Mammary epithelial cell (primary cell): ENCODE measurements at regions of chr15 and their contacts with region 1.

Region 1: DNA sequence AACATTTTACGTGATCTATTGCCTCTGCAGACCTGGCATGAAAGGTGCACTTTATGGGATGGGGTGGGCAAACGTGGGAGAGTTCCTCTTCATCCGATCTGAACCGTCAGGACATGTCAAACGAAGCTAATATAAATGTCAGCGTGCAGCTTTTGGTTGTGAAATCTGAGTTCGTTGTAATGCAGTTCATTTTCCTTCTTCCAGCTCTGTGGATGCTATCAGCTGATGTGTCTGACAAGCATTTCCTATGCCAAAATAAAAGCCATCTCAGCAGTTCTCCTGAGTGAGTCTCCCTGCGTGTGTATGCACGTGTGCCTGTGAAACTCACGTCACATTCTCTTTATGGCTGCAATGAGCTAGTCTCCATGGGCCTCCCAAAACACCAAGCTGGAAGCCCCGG is 512.3 kb downstream of the MCTP2 start:
- DNase-seq: peak; percentile 56
- H3K4me3 ChIP-seq: peak overlapping the region in 1 of 3 experiments; percentile 9
- H3K27ac ChIP-seq: peak overlapping the region; percentile 18
- H3K4me1 ChIP-seq: peaks cover 23% of the 10 kb centered on the region
- H3K27me3 ChIP-seq: no peaks in the 10 kb centered on the region
- CTCF ChIP-seq: no peak

Region 2: DNA sequence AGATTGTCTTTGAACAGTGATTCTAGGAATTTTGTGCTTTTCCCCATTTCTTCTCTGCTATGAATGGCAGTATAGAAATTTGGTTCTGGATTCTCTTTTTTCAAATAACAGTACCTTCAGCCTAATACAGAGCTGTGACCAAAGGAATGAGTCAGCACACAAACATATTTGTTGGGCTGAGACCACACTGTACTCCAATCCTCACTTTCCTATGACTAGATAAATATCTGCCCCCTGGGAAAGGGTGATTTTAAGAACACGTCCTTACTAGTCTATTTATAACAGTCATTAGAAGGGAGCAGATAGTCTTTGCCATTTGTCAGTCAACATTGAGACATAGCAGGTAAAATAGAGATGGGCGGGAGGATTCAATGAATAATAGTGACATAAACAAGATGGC is 51.0 kb before region 1 on chr15:
- CTCF ChIA-PET with region 1: no interaction called
- dilution Hi-C with region 1: loop called (anchors 5 kb)
- in situ Hi-C with region 1: no loop called
- intact Hi-C with region 1: no loop called
- DNase-seq: peak; percentile 81
- H3K4me3 ChIP-seq: no peak overlapping the region
- H3K27ac ChIP-seq: peak overlapping the region; percentile 14
- H3K4me1 ChIP-seq: peaks cover 19% of the 10 kb centered on the region
- H3K27me3 ChIP-seq: no peaks in the 10 kb centered on the region
- CTCF ChIP-seq: no peak